GM12878 (cell line): ENCODE measurements at regions of chr6 and their contacts with region 1.

Region 1: DNA sequence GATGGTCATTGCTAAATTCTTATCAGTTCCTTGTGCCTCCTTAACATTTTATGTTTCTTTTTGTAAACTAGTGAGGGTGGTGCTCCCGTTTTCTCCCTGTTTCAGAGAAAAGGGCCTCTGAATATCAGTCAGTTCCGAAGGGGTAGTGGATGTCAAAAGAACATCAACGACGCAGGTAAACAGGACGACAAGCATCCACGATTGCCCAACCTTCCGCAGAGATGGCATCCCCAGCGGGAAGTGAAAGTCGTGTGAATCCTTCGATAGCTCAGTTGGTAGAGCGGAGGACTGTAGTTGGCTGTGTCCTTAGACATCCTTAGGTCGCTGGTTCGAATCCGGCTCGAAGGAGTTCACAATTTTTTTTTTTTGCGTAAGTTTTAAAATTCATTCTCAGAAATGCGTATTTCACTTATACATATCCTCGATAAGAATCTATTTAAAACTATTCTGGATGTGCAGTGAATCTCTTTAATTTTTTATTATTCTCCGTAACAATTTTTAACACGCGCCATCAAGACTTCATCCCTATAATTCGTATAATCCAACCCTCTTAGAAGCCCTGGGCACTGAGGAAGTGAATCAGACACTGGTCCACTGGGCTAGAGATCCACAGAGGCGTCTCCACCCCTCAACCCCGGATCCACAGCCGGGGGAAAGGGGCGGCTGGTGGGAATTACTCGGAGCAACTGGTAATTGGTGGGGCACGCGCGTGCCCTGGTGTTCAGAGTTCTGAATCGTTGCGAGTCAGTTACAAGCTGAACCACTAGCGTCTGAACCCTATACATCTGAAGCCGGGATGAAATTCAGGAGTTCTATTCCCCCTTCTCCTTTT is 27.9 kb upstream of the ABT1 start:
- DNase-seq: peak; percentile 100
- ATAC-seq: peak; percentile 76
- H3K4me3 ChIP-seq: peak overlapping the region; percentile 81
- H3K27ac ChIP-seq: no peak overlapping the region
- H3K4me1 ChIP-seq: peaks cover 13% of the 10 kb centered on the region
- H3K27me3 ChIP-seq: no peaks in the 10 kb centered on the region
- CTCF ChIP-seq: peak; percentile 52 to 79 (median 52); a peak in 5 of 6 replicates
- EP300 ChIP-seq: peak in 1 of 2 experiments; percentile 48; a peak in 1 of 4 replicates
- POLR2A ChIP-seq: no peak
- RAD21 ChIP-seq: peak; percentile 55

Region 2: DNA sequence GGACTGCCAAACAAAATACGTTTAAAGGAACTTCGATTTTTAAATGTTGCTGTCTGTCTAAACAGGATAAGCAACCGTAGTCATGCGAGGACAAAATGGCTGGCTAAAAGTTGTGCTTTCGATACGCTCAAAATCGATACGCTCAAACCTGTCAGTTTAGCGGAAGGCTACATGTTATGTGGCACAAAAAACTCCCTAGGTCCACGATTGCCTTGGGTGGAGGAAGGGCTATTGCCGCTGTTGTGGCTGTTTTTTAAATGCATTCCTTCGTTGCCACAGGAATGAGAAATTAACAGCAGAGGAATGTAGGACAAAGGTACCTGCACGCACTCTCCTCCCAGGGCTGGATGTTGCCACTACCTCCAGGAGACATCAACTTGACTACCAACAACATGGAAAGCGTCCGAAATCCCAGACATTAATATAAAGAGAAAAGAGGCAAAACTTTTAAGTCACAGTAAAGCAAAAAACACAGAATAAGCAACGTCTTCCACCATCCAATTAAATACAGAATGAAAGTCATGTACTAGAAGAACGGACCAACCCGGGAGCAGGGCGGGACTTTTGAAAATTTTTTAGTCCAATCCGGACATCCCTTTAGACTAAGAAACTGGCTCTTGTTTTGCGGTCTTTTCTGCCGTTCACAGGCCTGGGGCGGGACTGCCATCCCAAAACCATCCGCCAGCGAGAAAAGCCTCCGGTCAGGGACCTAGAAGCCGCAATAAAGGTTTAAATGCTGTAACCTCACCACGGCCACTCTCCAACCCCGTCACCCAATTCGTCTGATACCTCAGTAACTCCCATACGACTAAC is 513.8 kb before region 1 on chr6:
- CTCF ChIA-PET with region 1: no interaction called
- POLR2A ChIA-PET with region 1: no interaction called
- RAD21 ChIA-PET with region 1: no interaction called
- SMC1A ChIA-PET with region 1: no interaction called
- in situ Hi-C with region 1: no loop called
- intact Hi-C with region 1: no loop called
- DNase-seq: peak; percentile 88
- ATAC-seq: peak; percentile 71
- H3K4me3 ChIP-seq: peak overlapping the region; percentile 75
- H3K27ac ChIP-seq: peak overlapping the region; percentile 93
- H3K4me1 ChIP-seq: peaks cover 4% of the 10 kb centered on the region; the same call in 1 of the 2 replicates
- H3K27me3 ChIP-seq: no peaks in the 10 kb centered on the region
- CTCF ChIP-seq: peak in 1 of 3 experiments; percentile 26; a peak in 1 of 6 replicates
- EP300 ChIP-seq: no peak
- POLR2A ChIP-seq: peak; percentile 67
- RAD21 ChIP-seq: no peak

Region 3: DNA sequence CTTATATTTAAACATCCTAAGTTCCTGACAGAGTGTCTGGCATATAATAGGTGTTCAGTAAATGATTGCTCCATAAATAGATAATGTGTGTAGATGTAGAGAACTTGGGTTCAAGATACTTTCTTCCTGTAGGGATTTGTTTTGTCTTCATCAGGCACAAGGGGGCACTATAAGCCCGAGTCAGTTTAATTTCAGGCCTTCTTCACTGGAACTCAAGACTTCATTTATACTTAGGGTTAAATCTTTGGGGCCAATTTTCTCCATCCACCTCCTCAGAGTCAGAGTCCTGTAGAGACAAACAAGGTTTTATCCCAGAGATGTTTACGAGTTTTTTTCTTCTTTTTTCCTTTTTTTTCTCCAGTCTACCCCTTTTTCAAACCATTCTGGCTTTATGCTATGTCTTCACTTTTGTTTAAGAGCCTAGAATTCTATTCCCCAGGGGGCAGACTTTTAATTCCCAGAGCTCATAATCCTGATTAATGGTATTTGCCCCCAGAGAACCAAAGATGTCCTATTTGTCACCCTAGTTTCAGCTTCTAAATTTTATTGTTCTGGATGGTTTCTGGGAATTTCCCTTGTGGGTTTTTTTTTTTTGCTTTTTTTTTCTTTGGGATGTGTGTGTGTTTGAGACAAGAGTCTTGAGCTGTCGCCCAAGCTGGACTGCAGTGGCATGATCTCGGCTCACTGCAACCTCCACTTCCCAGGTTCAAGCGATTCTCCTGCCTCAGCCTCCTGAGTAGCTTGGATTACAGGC is 393.2 kb before region 1 on chr6:
- CTCF ChIA-PET with region 1: interaction called, 16 read pairs
- POLR2A ChIA-PET with region 1: interaction called, 8 read pairs
- RAD21 ChIA-PET with region 1: interaction called, 15 read pairs
- SMC1A ChIA-PET with region 1: interaction called, 13 read pairs
- in situ Hi-C with region 1: no loop called
- intact Hi-C with region 1: no loop called
- DNase-seq: no peak
- ATAC-seq: peak; percentile 28
- H3K4me3 ChIP-seq: peak overlapping the region; percentile 9; the same call in 1 of the 2 replicates
- H3K27ac ChIP-seq: peak overlapping the region; percentile 27
- H3K4me1 ChIP-seq: peaks cover 27% of the 10 kb centered on the region
- H3K27me3 ChIP-seq: no peaks in the 10 kb centered on the region
- CTCF ChIP-seq: peak; percentile 56 to 77 (median 64); a peak in 5 of 6 replicates
- EP300 ChIP-seq: no peak
- POLR2A ChIP-seq: no peak
- RAD21 ChIP-seq: peak; percentile 91

Region 4: GRCh38 chr6:26322645-26323482 is 246.0 kb before region 1 on chr6:
- CTCF ChIA-PET with region 1: interaction called, 15 read pairs
- POLR2A ChIA-PET with region 1: no interaction called
- RAD21 ChIA-PET with region 1: no interaction called
- SMC1A ChIA-PET with region 1: interaction called, 6 read pairs
- in situ Hi-C with region 1: no loop called
- intact Hi-C with region 1: no loop called
- DNase-seq: peak; percentile 87
- ATAC-seq: peak; percentile 58
- H3K4me3 ChIP-seq: peak overlapping the region; percentile 69
- H3K27ac ChIP-seq: no peak overlapping the region
- H3K4me1 ChIP-seq: peaks cover 7% of the 10 kb centered on the region
- H3K27me3 ChIP-seq: no peaks in the 10 kb centered on the region
- CTCF ChIP-seq: no peak
- EP300 ChIP-seq: no peak; a peak in 1 of 4 replicates
- POLR2A ChIP-seq: no peak
- RAD21 ChIP-seq: no peak

Region 5: DNA sequence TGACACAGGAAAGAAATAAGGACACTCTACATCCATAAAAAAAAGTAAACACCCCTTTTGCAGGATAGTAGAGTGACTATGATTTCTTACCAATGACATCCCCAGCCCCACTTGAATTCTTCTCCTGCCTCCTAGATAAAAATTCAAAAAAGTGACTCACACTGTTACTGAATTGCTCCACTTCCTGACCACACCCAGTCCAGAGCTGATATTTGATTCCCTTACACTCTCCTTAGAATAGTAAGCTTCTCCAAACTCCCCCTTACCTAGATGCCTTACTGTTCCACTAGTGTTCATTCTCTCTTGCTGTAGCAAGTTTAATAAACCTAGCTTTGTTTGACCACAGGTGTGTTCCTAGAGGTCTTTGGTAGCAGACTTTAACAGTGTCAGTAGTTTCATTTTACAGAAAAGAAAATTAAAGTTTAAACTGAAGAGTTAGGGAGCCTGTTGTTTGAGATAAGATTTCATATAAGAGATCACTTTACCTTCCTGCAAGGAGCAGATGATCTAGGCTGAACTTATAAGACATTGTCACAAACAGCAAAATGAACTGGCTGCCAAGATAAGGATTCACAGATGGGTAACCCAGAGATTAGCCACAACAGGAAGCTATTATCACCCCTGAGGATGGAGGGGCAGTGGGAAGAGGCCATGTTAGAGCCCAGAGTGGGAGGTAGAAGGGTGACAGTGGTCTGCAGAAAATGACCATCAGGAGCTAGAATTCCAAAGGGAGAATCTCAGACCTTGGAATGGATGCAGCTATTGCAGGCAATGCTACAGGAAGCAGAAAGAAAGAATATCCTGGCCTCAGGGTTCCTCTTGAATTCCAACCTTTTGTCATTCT is 232.2 kb before region 1 on chr6:
- CTCF ChIA-PET with region 1: interaction called, 96 read pairs
- POLR2A ChIA-PET with region 1: interaction called, 4 read pairs
- RAD21 ChIA-PET with region 1: interaction called, 50 read pairs
- SMC1A ChIA-PET with region 1: interaction called, 25 read pairs
- in situ Hi-C with region 1: no loop called
- intact Hi-C with region 1: no loop called
- DNase-seq: no peak
- ATAC-seq: peak; percentile 21
- H3K4me3 ChIP-seq: no peak overlapping the region
- H3K27ac ChIP-seq: peak overlapping the region; percentile 4; the same call in 1 of the 2 replicates
- H3K4me1 ChIP-seq: peaks cover 14% of the 10 kb centered on the region; the same call in 1 of the 2 replicates
- H3K27me3 ChIP-seq: no peaks in the 10 kb centered on the region
- CTCF ChIP-seq: no peak
- EP300 ChIP-seq: no peak
- POLR2A ChIP-seq: no peak
- RAD21 ChIP-seq: no peak

Region 6: GRCh38 chr6:26532699-26533531 is 35.9 kb before region 1 on chr6:
- CTCF ChIA-PET with region 1: interaction called, 13 read pairs
- POLR2A ChIA-PET with region 1: interaction called, 5 read pairs
- RAD21 ChIA-PET with region 1: interaction called, 16 read pairs
- SMC1A ChIA-PET with region 1: interaction called, 20 read pairs
- in situ Hi-C with region 1: no loop called
- intact Hi-C with region 1: loop called (anchors 1 kb)
- DNase-seq: peak; percentile 99
- ATAC-seq: peak; percentile 59
- H3K4me3 ChIP-seq: peak overlapping the region; percentile 79
- H3K27ac ChIP-seq: peak overlapping the region; percentile 73
- H3K4me1 ChIP-seq: peaks cover 17% of the 10 kb centered on the region
- H3K27me3 ChIP-seq: no peaks in the 10 kb centered on the region
- CTCF ChIP-seq: no peak
- EP300 ChIP-seq: peak in 1 of 2 experiments; percentile 55; a peak in 1 of 4 replicates
- POLR2A ChIP-seq: no peak
- RAD21 ChIP-seq: no peak

Region 7: GRCh38 chr6:26537846-26538571 is 30.8 kb before region 1 on chr6 and contains the start of gene HMGN4:
- CTCF ChIA-PET with region 1: interaction called, 13 read pairs
- POLR2A ChIA-PET with region 1: interaction called, 5 read pairs
- RAD21 ChIA-PET with region 1: interaction called, 16 read pairs
- SMC1A ChIA-PET with region 1: interaction called, 20 read pairs
- in situ Hi-C with region 1: no loop called
- intact Hi-C with region 1: loop called (anchors 1 kb)
- DNase-seq: peak; percentile 96
- ATAC-seq: peak; percentile 81
- H3K4me3 ChIP-seq: peak within 1 kb of the TSS; percentile 86
- H3K27ac ChIP-seq: peak within 1 kb of the TSS; percentile 99
- H3K4me1 ChIP-seq: peaks cover 14% of the 10 kb centered on the region
- H3K27me3 ChIP-seq: no peaks in the 10 kb centered on the region
- CTCF ChIP-seq: 0 out of 6 replicates have a peak, but pooled peaks of 1 of the 3 experiments have one; percentile 8
- EP300 ChIP-seq: peak in 1 of 2 experiments; percentile 74; a peak in 1 of 4 replicates
- POLR2A ChIP-seq: peak; percentile 84
- RAD21 ChIP-seq: no peak
- polyA plus RNA-seq, gene HMGN4: 26.7 to 31.2 TPM

Region 8: DNA sequence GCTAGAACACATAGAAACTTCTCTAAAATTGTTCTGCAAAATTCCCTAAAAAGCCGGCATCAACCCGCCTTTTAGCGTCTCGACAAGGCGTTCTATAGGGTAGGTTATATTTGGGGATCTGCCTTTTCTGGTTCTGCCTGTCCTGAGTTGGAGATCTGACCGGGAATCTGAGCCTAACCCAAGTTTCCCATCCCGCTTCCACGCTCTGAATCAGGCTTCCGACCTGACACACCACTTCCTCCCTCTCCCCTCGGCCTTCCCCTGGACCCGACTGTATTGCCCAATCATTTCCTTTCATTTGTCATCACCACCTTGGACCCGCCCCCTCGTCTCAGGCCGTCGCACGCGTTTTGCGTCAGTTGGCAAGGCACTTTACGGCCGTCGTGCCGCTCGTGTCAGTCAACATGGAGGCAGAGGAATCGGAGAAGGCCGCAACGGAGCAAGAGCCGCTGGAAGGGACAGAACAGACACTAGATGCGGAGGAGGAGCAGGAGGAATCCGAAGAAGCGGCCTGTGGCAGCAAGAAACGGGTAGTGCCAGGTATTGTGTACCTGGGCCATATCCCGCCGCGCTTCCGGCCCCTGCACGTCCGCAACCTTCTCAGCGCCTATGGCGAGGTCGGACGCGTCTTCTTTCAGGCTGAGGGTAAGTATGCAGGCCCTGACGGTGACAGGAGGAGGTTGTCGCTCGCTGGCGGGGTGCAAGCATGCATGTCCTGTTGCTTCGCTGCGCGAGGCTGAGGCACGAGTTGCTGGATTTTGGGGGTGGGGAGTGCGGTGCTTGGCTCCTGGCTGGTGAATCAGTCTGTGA is 28.0 kb after region 1 on chr6 and contains the start of gene ABT1:
- CTCF ChIA-PET with region 1: interaction called, 267 read pairs
- POLR2A ChIA-PET with region 1: interaction called, 6 read pairs
- RAD21 ChIA-PET with region 1: interaction called, 64 read pairs
- SMC1A ChIA-PET with region 1: interaction called, 170 read pairs
- in situ Hi-C with region 1: no loop called
- intact Hi-C with region 1: loop called (anchors 1 kb)
- DNase-seq: peak; percentile 96
- ATAC-seq: peak; percentile 88
- H3K4me3 ChIP-seq: peak within 1 kb of the TSS; percentile 93
- H3K27ac ChIP-seq: peak within 1 kb of the TSS; percentile 85
- H3K4me1 ChIP-seq: peaks cover 18% of the 10 kb centered on the region
- H3K27me3 ChIP-seq: no peaks in the 10 kb centered on the region
- CTCF ChIP-seq: no peak
- EP300 ChIP-seq: no peak
- POLR2A ChIP-seq: peak; percentile 97
- RAD21 ChIP-seq: no peak
- polyA plus RNA-seq, gene ABT1: 8.4 to 11.3 TPM

Region 9: GRCh38 chr6:27251606-27252251 is 682.9 kb after region 1 on chr6:
- CTCF ChIA-PET with region 1: no interaction called
- POLR2A ChIA-PET with region 1: no interaction called
- RAD21 ChIA-PET with region 1: no interaction called
- SMC1A ChIA-PET with region 1: no interaction called
- in situ Hi-C with region 1: no loop called
- intact Hi-C with region 1: no loop called
- DNase-seq: peak; percentile 40
- ATAC-seq: peak; percentile 97
- H3K4me3 ChIP-seq: peak overlapping the region; percentile 90; the same call in 1 of the 2 replicates
- H3K27ac ChIP-seq: no peak overlapping the region
- H3K4me1 ChIP-seq: peaks cover 5% of the 10 kb centered on the region; the same call in 1 of the 2 replicates
- H3K27me3 ChIP-seq: peaks cover 0 to 2% of the 10 kb centered on the region in 2 experiments; a peak in 2 of 4 replicates
- CTCF ChIP-seq: peak; percentile 58 to 62 (median 60)
- EP300 ChIP-seq: no peak
- POLR2A ChIP-seq: peak; percentile 80
- RAD21 ChIP-seq: peak; percentile 17; the same call in 1 of the 2 replicates